ENCODE measurements at regions of chr7 and their contacts with region 1.

Region 1: DNA sequence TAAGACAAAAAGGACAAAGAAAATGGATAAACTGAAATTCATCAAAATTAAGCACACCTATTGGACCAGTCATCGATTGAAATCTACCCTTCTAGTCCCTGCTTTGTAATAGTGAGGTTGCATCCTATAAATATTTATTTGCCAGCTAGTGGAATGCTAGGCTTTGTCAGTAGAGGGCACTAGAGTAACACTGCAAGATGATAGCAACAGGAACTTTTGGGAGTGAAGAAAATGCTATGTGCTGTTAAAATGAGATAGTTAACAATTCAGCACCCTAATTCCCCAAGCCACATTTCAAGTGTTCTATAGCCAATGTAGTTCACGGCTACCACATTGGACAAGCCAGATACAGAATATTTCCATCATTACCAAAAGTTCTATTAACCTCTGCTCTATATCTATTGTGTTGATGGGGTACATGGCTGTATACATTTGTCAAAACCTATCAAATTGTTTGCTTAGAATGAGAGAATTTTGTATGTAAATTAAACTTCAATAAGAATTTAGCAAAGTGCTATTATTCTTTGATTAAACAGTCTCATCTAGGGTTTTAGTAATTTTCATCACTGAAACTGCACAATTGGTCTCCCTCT is 69.8 kb downstream of the LSMEM1 start:
- DNase-seq: peak; percentile 71
- ATAC-seq: peak; percentile 87
- H3K4me3 ChIP-seq: no peak overlapping the region
- H3K27ac ChIP-seq: no peak overlapping the region
- H3K4me1 ChIP-seq: no peaks in the 10 kb centered on the region
- H3K27me3 ChIP-seq: no peaks in the 10 kb centered on the region; the same call in 1 of the 2 replicates
- CTCF ChIP-seq: peak; percentile 94
- POLR2A ChIP-seq: 0 out of 2 replicates have a peak, but pooled peaks have one; percentile 39
- RAD21 ChIP-seq: peak; percentile 96

Region 2: DNA sequence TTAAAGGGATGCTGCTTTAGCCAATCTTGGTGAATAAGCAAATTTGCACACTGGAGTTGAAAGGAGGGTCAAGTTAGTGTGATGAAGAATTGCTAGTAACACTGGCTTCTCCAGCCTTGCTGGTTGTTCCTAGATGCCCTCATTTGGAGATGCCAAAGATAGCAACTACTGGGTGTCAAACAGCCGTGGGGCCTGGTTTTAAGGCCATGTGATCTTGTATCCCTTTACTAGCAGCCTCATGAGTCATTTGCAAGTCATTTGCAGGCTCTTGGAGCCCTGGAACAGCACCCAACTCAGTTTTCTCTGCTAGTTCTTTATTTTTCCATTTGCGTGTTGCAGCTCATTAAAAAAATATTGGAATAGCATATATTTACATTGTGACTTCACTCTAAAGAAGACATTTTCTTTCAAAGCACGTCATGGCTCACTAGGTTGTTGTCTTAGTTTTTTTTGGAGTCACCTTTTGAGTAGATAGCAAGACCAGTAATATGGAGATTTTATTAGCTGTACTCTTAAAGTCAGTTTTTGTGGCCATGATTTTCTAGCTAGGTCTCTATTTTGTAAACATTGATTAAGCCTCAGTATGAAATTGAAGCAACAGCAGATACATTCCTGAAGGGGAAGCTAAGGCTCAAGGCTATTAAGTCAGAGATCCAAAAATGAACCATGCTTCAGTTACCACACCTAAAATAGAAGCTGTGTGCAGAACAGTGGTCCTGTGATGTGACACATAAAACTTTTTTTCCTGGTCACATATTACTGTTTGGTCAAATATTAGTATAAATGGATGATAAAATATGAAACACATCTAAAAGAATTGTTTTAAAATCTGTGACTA is 68.5 kb before region 1 on chr7:
- CTCF ChIA-PET with region 1: no interaction called
- POLR2A ChIA-PET with region 1: no interaction called
- dilution Hi-C with region 1: no loop called
- in situ Hi-C with region 1: no loop called
- intact Hi-C with region 1: loop called (anchors 1 kb)
- DNase-seq: peak; percentile 86
- ATAC-seq: peak; percentile 69
- H3K4me3 ChIP-seq: no peak overlapping the region
- H3K27ac ChIP-seq: peak overlapping the region; percentile 31; the same call in 1 of the 2 replicates
- H3K4me1 ChIP-seq: peaks cover 4% of the 10 kb centered on the region; the same call in 1 of the 2 replicates
- H3K27me3 ChIP-seq: no peaks in the 10 kb centered on the region
- CTCF ChIP-seq: no peak
- POLR2A ChIP-seq: no peak
- RAD21 ChIP-seq: no peak

Region 3: DNA sequence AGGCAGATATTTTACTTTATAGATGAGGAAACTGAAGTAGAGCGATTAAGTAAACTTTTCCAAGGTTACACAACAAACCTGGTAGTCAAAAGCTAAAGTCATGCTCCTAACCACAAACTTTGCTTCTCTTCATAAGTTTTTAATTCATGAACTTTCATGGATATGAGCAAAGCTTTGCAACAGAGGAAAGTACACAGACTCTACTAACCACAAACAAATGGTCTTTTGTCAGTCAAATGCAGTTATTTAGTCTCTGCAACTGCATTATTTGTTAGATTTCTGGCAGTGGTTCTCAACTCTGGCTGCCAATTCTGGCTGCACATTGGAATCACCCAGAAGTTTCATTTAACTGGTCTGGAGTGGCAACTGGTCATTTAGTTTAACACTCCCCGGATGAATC is 380.2 kb after region 1 on chr7:
- CTCF ChIA-PET with region 1: interaction called, 10 read pairs
- POLR2A ChIA-PET with region 1: no interaction called
- dilution Hi-C with region 1: no loop called
- in situ Hi-C with region 1: no loop called
- intact Hi-C with region 1: no loop called
- DNase-seq: peak; percentile 76
- ATAC-seq: peak; percentile 60
- H3K4me3 ChIP-seq: no peak overlapping the region
- H3K27ac ChIP-seq: no peak overlapping the region; the same call in 1 of the 2 replicates
- H3K4me1 ChIP-seq: no peaks in the 10 kb centered on the region
- H3K27me3 ChIP-seq: no peaks in the 10 kb centered on the region
- CTCF ChIP-seq: no peak
- POLR2A ChIP-seq: no peak
- RAD21 ChIP-seq: no peak

Region 4: DNA sequence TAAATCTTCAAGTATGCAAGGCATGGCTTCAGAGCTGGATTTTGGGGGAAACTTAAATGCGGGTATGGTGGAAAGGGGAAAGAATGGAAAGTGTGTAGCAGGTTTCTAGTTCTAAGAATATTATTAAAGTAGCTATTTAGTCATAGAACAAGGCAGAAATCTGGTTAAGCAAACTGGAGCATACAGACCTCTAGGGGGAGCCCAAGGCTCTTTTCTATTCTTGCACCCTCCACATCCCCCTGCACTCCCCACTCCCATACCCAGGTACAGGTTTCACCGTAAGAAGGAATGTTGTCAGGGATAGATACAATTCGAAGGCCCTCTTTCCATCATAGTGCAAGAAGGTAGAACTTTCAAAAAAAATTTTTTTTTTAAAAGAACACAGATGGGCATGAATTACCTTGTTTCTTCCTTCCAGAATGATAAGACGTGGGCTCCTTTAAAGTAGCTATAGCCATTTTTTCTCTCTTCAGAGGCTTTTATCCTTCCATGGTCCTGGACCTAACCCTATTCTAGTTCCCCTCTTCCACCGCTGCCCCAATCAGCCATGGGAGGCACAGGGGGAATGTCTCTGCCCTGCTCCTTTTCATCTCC is 609.3 kb after region 1 on chr7:
- CTCF ChIA-PET with region 1: no interaction called
- POLR2A ChIA-PET with region 1: no interaction called
- dilution Hi-C with region 1: no loop called
- in situ Hi-C with region 1: no loop called
- intact Hi-C with region 1: loop called (anchors 2 kb)
- DNase-seq: peak; percentile 45
- ATAC-seq: peak; percentile 75
- H3K4me3 ChIP-seq: no peak overlapping the region
- H3K27ac ChIP-seq: no peak overlapping the region
- H3K4me1 ChIP-seq: no peaks in the 10 kb centered on the region
- H3K27me3 ChIP-seq: no peaks in the 10 kb centered on the region
- CTCF ChIP-seq: peak; percentile 74
- POLR2A ChIP-seq: no peak
- RAD21 ChIP-seq: peak; percentile 71

Region 5: DNA sequence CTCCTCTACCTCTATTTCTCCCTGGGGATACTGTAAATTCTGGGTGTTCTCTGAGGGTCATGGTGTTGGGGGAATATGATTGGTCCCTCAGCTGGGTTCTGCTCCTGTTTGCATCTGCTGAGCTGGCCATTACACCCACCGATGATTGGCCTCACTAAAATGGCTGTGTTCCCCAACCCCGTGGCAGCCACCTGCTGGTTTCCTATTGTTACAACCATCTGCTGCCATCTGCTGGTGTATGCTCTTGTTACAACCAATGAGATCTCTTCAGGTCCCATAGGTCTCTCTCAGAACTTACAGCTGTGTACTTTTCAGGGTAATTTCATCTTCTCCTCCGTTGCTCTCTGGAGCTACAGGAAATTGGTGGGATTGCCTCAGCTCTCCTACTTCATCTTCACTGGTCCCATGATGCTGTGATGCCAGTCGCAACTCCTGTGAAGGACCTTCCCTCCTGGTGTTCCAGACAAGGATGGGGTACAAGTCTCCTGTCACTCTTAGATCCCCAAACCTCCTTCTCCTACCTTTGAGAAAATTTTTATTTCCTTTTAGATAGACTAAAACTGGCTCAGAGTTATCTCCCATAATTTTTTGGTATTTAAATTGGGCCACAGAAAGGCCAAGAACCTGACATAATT is 871.2 kb after region 1 on chr7:
- CTCF ChIA-PET with region 1: interaction called, 8 read pairs
- POLR2A ChIA-PET with region 1: no interaction called
- dilution Hi-C with region 1: no loop called
- in situ Hi-C with region 1: loop called (anchors 25 kb)
- intact Hi-C with region 1: loop called (anchors 1 kb)
- DNase-seq: peak; percentile 82
- ATAC-seq: peak; percentile 97
- H3K4me3 ChIP-seq: no peak overlapping the region
- H3K27ac ChIP-seq: no peak overlapping the region
- H3K4me1 ChIP-seq: no peaks in the 10 kb centered on the region
- H3K27me3 ChIP-seq: no peaks in the 10 kb centered on the region
- CTCF ChIP-seq: peak; percentile 97
- POLR2A ChIP-seq: no peak; the same call in 1 of the 2 replicates
- RAD21 ChIP-seq: peak; percentile 93

Region 6: GRCh38 chr7:113710310-113711106 is 1159.9 kb after region 1 on chr7:
- CTCF ChIA-PET with region 1: no interaction called
- POLR2A ChIA-PET with region 1: no interaction called
- dilution Hi-C with region 1: no loop called
- in situ Hi-C with region 1: no loop called
- intact Hi-C with region 1: loop called (anchors 1 kb)
- DNase-seq: peak; percentile 83
- ATAC-seq: peak; percentile 90
- H3K4me3 ChIP-seq: no peak overlapping the region
- H3K27ac ChIP-seq: no peak overlapping the region
- H3K4me1 ChIP-seq: no peaks in the 10 kb centered on the region
- H3K27me3 ChIP-seq: no peaks in the 10 kb centered on the region
- CTCF ChIP-seq: peak; percentile 70
- POLR2A ChIP-seq: no peak
- RAD21 ChIP-seq: peak; percentile 53

Measured in IMR-90 (cell line).